Common myeloid progenitor, CD34-positive (primary cell): ENCODE measurements at regions of chr2 and their contacts with region 1.

Region 1: GRCh38 chr2:16413285-16413684 is 252.3 kb downstream of the CYRIA start:
- DNase-seq: peak; percentile 88 to 97 (median 94)
- H3K4me3 ChIP-seq: peak overlapping the region in 1 of 7 experiments; percentile 24
- H3K27ac ChIP-seq: peak overlapping the region; percentile 51 to 83
- H3K4me1 ChIP-seq: peaks cover 19 to 31% (median 20%) of the 10 kb centered on the region in 4 experiments
- H3K27me3 ChIP-seq: no peaks in the 10 kb centered on the region

Region 2: DNA sequence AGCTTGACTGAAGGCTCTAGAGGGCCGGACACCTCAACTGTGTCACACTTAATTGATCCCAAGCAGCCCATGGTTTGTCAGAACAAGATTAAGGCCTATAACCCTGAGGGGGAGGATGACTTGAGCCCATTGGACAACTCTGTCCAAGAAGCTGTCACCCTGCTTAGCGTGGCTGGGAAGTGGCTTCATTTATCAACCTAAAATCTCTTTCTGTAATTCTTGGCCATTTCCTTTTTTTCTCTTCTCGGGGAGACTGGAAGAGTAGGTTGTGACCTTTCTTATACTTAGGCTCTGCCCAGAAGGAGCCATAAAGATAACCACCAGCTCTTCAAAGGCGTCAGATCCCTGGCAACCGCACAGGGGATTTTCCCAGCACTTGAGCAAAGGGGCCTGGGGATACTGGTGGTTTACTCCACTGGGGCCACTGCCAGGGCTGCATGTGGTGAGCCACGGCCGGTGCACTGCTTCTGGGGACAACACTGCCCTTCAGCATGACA is 13.1 kb before region 1 on chr2:
- CTCF ChIA-PET with region 1: interaction called, 26 read pairs
- POLR2A ChIA-PET with region 1: interaction called, 21 read pairs
- DNase-seq: peak; percentile 85 to 97 (median 96)
- H3K4me3 ChIP-seq: no peak overlapping the region
- H3K27ac ChIP-seq: no peak overlapping the region
- H3K4me1 ChIP-seq: peaks cover 3 to 26% (median 14%) of the 10 kb centered on the region in 4 experiments
- H3K27me3 ChIP-seq: no peaks in the 10 kb centered on the region

Region 3: GRCh38 chr2:16425462-16426336 is 12.4 kb after region 1 on chr2:
- CTCF ChIA-PET with region 1: interaction called, 28 read pairs
- POLR2A ChIA-PET with region 1: interaction called, 3 read pairs
- DNase-seq: no peak
- H3K4me3 ChIP-seq: no peak overlapping the region
- H3K27ac ChIP-seq: no peak overlapping the region
- H3K4me1 ChIP-seq: peaks cover 8 to 23% (median 19%) of the 10 kb centered on the region in 4 experiments
- H3K27me3 ChIP-seq: no peaks in the 10 kb centered on the region

Region 4: GRCh38 chr2:16478434-16479210 is 65.3 kb after region 1 on chr2:
- CTCF ChIA-PET with region 1: interaction called, 6 read pairs
- POLR2A ChIA-PET with region 1: interaction called, 12 read pairs
- DNase-seq: peak; percentile 68 to 93 (median 89)
- H3K4me3 ChIP-seq: peak overlapping the region in 6 of 7 experiments; percentile 20 to 76 (median 62)
- H3K27ac ChIP-seq: peak overlapping the region; percentile 77 to 84
- H3K4me1 ChIP-seq: peaks cover 45 to 92% (median 78%) of the 10 kb centered on the region in 4 experiments
- H3K27me3 ChIP-seq: no peaks in the 10 kb centered on the region

Region 5: DNA sequence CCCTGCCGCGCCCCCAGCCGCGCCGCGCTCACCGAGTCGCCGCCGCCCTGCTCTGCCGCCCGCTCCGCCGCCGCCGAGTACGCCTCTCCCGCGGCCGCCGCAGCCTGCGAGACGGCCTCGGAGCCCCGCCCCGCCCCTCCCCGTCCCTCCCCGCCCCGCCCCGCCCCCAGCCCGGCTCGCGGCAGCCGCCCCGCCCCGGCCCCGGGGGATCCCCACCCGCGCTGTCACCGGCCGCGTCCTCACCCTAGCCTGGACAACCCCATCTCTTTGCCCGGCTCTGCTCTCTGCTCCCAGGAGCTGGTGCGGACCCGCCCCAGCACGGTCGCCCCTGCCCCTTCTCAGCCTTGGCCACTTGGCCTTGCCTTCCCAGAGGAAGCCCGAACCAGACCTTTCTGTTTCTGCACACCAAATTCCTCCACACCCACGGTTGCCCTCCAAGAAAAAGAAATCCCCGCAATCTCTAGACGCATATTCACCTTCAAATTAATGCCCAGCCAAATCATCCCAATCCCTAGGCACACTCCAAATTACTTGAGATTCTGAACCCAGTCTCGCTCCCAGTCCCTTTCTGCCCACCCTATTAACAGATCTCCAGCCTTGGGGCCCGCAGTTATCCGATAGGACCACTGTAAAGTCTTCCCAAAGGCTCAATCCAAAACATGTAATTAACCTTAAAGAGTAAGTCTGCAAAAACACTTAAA is 252.6 kb after region 1 on chr2 and contains the start of gene CYRIA:
- CTCF ChIA-PET with region 1: no interaction called
- POLR2A ChIA-PET with region 1: no interaction called
- DNase-seq: peak; percentile 36 to 72 (median 62)
- H3K4me3 ChIP-seq: peak within 1 kb of the TSS; percentile 42 to 84 (median 71)
- H3K27ac ChIP-seq: peak within 1 kb of the TSS in 1 of 2 experiments; percentile 37
- H3K4me1 ChIP-seq: peaks cover 8 to 35% (median 34%) of the 10 kb centered on the region in 4 experiments
- H3K27me3 ChIP-seq: peaks cover 0 to 4% (median 0%) of the 10 kb centered on the region in 5 experiments